Dendritic cell treated with granulocyte-macrophage colony-stimulating factor and Interleukin-4, amounts not matched to agents 40 ng/mL and 50 ng/mL, for 4 days (primary cell): ENCODE measurements at regions of chr7 and their contacts with region 1.

Region 1: GRCh38 chr7:140517546-140518369 is 38.5 kb upstream of the MKRN1 start:
- H3K4me3 Mint-ChIP-seq: no peak overlapping the region
- H3K27ac Mint-ChIP-seq: no peak overlapping the region
- H3K4me1 Mint-ChIP-seq: peaks cover 6% of the 10 kb centered on the region
- H3K27me3 Mint-ChIP-seq: peaks cover 4% of the 10 kb centered on the region

Region 2: DNA sequence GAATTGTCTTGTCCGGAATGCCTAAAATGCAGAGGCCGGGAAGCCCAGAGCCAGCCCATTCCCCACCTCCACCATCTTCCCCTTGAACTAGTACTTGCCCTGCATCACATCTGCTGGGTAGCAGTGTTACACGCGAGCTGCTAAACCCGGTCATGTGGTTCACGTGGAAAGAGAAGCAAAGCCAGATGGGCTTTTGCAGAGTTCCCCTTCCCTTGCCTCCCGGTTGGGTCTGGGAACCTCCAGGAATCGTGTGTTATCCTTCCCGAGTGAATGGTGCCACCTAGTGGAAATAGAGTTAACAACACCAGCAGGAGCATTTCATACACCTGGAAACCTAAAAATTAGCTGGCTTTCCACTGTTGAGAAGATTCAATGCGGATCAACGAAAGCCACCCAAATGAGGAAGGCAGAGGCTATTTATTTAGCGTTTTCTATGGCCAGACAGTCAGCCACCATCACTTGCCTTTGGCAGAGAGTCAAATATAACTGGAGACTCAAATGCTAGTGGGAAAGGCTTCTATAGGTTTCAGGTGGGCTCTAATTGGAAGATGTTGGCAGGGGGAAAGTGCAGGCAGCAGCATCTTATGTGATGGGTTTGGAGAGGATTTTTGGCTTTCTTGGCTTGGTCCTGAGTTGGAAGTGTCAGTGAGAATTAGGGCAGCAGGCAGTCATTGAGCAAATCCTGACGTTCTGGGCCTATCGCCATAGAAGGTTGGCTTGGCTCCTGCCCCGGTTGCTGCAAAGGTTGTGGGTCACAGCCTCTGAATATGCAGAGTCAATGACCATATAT is 135.8 kb after region 1 on chr7:
- intact Hi-C with region 1: loop called (anchors 1 kb)
- H3K4me3 Mint-ChIP-seq: no peak overlapping the region
- H3K27ac Mint-ChIP-seq: no peak overlapping the region
- H3K4me1 Mint-ChIP-seq: peaks cover 48% of the 10 kb centered on the region
- H3K27me3 Mint-ChIP-seq: peaks cover 17% of the 10 kb centered on the region